ENCODE measurements at regions of chr16 and their contacts with region 1.

Region 1: DNA sequence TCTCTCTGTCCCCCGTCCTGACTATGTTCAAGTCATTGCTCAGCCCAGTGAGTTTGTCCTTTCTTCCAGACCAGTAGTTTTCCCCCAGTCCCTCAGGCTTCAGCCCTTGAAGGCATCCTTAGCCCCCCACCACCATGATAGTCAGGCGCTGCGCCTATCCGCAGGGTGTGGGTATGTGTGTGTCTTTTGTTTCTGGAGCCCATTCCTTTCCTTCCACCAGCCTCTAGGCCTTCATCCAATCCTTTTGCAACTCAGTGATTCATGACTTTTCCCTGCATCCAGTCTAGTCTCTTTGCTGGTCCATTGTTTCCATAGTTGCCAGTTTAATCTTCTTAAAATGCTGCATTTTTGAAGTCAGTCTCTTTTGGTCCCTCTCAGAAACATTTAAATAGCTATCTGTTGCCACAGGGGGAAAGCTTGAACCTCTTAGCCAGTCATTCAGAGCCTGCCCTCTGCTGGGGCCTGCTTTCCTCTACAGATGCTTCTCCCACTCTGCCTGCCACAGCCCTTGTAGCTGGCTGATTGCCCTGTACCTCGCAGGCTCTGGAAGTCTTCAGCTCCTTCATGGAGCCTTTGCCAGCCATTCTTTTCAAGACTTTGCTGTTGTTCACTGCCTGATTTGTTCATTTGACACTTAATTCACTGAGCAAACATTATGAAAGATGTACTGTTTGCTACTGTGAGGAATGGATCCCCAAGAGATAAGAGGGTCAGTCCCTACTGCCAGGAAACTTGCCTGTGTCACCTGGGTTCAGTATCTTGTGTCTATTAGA is 55.9 kb upstream of the ADCY7 start:
- DNase-seq: peak; percentile 89
- H3K4me3 ChIP-seq: no peak overlapping the region
- H3K27ac ChIP-seq: no peak overlapping the region
- H3K4me1 ChIP-seq: peaks cover 21 to 27% of the 10 kb centered on the region in 2 donors
- H3K27me3 ChIP-seq: no peaks in the 10 kb centered on the region
- CTCF ChIP-seq: peak in 5 of 6 experiments; percentile 21 to 87 (median 71)
- POLR2A ChIP-seq: no peak

Region 2: GRCh38 chr16:50152807-50153452 is 57.5 kb before region 1 on chr16 and contains the start of gene TENT4B:
- intact Hi-C with region 1: loop called (anchors 10 kb)
- DNase-seq: peak; percentile 83 to 85
- H3K4me3 ChIP-seq: peak within 1 kb of the TSS; percentile 80 to 90 (median 87)
- H3K27ac ChIP-seq: peak within 1 kb of the TSS; percentile 85 to 97 (median 90)
- H3K4me1 ChIP-seq: peaks cover 17 to 21% of the 10 kb centered on the region in 2 donors
- H3K27me3 ChIP-seq: no peaks in the 10 kb centered on the region
- CTCF ChIP-seq: no peak
- POLR2A ChIP-seq: peak; percentile 43 to 78
- total RNA-seq, gene TENT4B: 10.0 to 14.7 (median 11.4) TPM

Region 3: GRCh38 chr16:50245417-50246298 is 35.2 kb after region 1 on chr16:
- intact Hi-C with region 1: no loop called
- DNase-seq: peak; percentile 32 to 37
- H3K4me3 ChIP-seq: peak overlapping the region in 2 of 3 donors; percentile 21 to 50
- H3K27ac ChIP-seq: no peak overlapping the region
- H3K4me1 ChIP-seq: peaks cover 8 to 16% of the 10 kb centered on the region in 2 donors
- H3K27me3 ChIP-seq: no peaks in the 10 kb centered on the region
- CTCF ChIP-seq: peak in 2 of 6 experiments; percentile 29 to 55
- POLR2A ChIP-seq: no peak

Region 4: DNA sequence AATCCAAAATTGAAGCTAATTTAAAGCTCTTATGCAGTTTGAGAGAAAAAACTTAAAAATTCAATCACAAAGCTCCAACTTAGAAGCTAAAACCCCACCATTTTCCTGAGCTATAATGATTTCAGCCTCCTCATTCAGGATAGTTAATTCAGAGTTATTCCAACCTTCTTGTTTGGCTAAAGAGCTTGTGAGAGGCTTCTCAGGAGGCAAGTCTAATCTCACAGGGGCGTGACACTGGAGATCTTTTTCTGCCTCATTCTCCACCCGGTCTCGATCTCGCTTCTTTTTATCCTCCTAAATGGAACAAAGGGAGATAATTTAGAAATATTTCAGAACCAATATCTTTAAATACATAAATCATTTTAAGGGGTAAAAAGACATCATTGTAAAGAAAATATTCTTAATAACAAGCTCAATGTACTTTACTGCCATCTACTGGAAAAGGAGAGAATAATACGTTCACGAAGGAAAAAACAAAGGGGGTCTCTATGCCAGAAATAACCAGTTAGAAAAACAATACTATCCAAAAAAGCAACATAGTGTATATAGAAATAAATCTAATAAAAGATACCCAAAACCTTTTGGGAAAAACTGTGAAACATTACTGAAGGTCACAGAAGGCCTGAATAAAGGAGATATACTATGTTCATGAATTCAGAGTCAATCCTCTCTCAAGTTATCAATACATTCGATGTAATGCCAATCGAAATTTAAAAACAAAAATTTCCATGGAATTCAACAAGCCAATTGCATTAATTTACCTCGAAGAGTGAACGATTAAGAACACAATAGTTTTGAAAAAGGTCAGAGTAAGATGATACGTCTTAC is 144.4 kb after region 1 on chr16:
- intact Hi-C with region 1: loop called (anchors 10 kb)
- DNase-seq: no peak
- H3K4me3 ChIP-seq: no peak overlapping the region
- H3K27ac ChIP-seq: no peak overlapping the region
- H3K4me1 ChIP-seq: peaks cover 0 to 3% of the 10 kb centered on the region in 2 donors
- H3K27me3 ChIP-seq: no peaks in the 10 kb centered on the region
- CTCF ChIP-seq: peak in 4 of 6 experiments; percentile 37 to 65 (median 58)
- POLR2A ChIP-seq: no peak

Region 5: GRCh38 chr16:50665128-50665878 is 454.9 kb after region 1 on chr16:
- intact Hi-C with region 1: loop called (anchors 5 kb)
- DNase-seq: peak; percentile 66 to 79
- H3K4me3 ChIP-seq: peak overlapping the region in 1 of 3 donors; percentile 19
- H3K27ac ChIP-seq: peak overlapping the region in 1 of 3 donors; percentile 25
- H3K4me1 ChIP-seq: peaks cover 3% of the 10 kb centered on the region in 2 donors
- H3K27me3 ChIP-seq: no peaks in the 10 kb centered on the region
- CTCF ChIP-seq: peak; percentile 61 to 92 (median 78)
- POLR2A ChIP-seq: no peak